Endothelial cell of umbilical vein (primary cell): ENCODE measurements at regions of chr4 and their contacts with region 1.

Region 1: GRCh38 chr4:146342600-146343192 is 128.4 kb downstream of the REELD1 start:
- DNase-seq: peak; percentile 70
- H3K4me3 ChIP-seq: no peak overlapping the region
- H3K27ac ChIP-seq: no peak overlapping the region
- H3K4me1 ChIP-seq: peaks cover 5% of the 10 kb centered on the region
- H3K27me3 ChIP-seq: no peaks in the 10 kb centered on the region
- CTCF ChIP-seq: peak in 1 of 2 donors; percentile 19
- POLR2A ChIP-seq: no peak

Region 2: GRCh38 chr4:146095091-146095690 is 247.5 kb before region 1 on chr4:
- CTCF ChIA-PET with region 1: interaction called, 17 read pairs
- POLR2A ChIA-PET with region 1: no interaction called
- dilution Hi-C with region 1: no loop called
- intact Hi-C with region 1: loop called (anchors 5 kb)
- DNase-seq: peak; percentile 61
- H3K4me3 ChIP-seq: no peak overlapping the region
- H3K27ac ChIP-seq: no peak overlapping the region
- H3K4me1 ChIP-seq: no peaks in the 10 kb centered on the region
- H3K27me3 ChIP-seq: peaks cover 4 to 9% of the 10 kb centered on the region in 2 experiments
- CTCF ChIP-seq: peak; percentile 55 to 59
- POLR2A ChIP-seq: no peak

Region 3: GRCh38 chr4:146232131-146232722 is 110.5 kb before region 1 on chr4:
- CTCF ChIA-PET with region 1: no interaction called
- POLR2A ChIA-PET with region 1: no interaction called
- dilution Hi-C with region 1: no loop called
- intact Hi-C with region 1: no loop called
- DNase-seq: no peak
- H3K4me3 ChIP-seq: no peak overlapping the region
- H3K27ac ChIP-seq: no peak overlapping the region
- H3K4me1 ChIP-seq: no peaks in the 10 kb centered on the region
- H3K27me3 ChIP-seq: peaks cover 3% of the 10 kb centered on the region in 2 experiments
- CTCF ChIP-seq: no peak
- POLR2A ChIP-seq: no peak

Region 4: DNA sequence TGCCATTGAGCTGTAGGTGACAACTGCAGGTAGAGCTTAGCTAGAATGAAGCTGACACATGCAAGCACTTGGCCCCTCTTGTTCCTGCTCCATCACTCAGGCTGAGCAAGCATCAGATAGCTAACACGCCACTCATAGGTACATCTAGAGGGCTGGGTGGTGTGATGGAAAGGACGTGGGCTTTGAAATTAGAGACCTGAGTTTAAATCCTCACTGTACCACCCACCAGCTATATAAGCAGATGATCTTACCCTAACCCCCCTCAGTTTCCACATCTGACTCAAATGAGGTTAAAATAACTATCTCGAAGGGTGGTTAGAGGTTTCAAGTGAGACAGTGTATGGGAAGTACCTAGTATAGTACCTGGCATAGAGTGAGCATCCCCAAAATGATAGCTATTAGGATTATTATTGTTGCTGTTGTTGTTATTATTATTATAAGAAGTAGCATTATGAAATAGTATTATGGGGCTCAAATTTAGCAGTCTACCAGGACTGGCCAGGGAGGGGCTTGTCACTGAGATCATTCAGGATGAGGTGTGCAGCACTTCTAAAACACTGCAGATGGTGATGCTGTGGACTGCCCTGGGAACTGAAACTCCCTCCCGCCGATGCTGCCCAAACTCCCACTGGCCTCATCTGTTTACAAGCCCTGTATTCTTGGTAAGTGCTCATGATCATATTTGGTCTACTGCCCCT is 69.3 kb before region 1 on chr4:
- CTCF ChIA-PET with region 1: no interaction called
- POLR2A ChIA-PET with region 1: no interaction called
- dilution Hi-C with region 1: no loop called
- intact Hi-C with region 1: no loop called
- DNase-seq: no peak
- H3K4me3 ChIP-seq: no peak overlapping the region
- H3K27ac ChIP-seq: no peak overlapping the region
- H3K4me1 ChIP-seq: no peaks in the 10 kb centered on the region
- H3K27me3 ChIP-seq: no peaks in the 10 kb centered on the region
- CTCF ChIP-seq: no peak
- POLR2A ChIP-seq: no peak

Region 5: GRCh38 chr4:146407669-146408084 is 65.0 kb after region 1 on chr4:
- CTCF ChIA-PET with region 1: interaction called, 11 read pairs
- POLR2A ChIA-PET with region 1: no interaction called
- dilution Hi-C with region 1: no loop called
- intact Hi-C with region 1: no loop called
- DNase-seq: peak; percentile 99
- H3K4me3 ChIP-seq: peak overlapping the region in 1 of 3 experiments; percentile 29
- H3K27ac ChIP-seq: peak overlapping the region; percentile 97
- H3K4me1 ChIP-seq: peaks cover 26% of the 10 kb centered on the region
- H3K27me3 ChIP-seq: no peaks in the 10 kb centered on the region
- CTCF ChIP-seq: no peak
- POLR2A ChIP-seq: peak; percentile 52

Region 6: GRCh38 chr4:146545102-146545501 is 202.4 kb after region 1 on chr4:
- CTCF ChIA-PET with region 1: interaction called, 10 read pairs
- POLR2A ChIA-PET with region 1: no interaction called
- dilution Hi-C with region 1: no loop called
- intact Hi-C with region 1: no loop called
- DNase-seq: peak; percentile 9
- H3K4me3 ChIP-seq: no peak overlapping the region
- H3K27ac ChIP-seq: no peak overlapping the region
- H3K4me1 ChIP-seq: no peaks in the 10 kb centered on the region
- H3K27me3 ChIP-seq: peaks cover 2 to 6% of the 10 kb centered on the region in 2 experiments
- CTCF ChIP-seq: peak; percentile 18 to 33
- POLR2A ChIP-seq: no peak

Region 7: GRCh38 chr4:146709956-146710355 is 367.3 kb after region 1 on chr4:
- CTCF ChIA-PET with region 1: no interaction called
- POLR2A ChIA-PET with region 1: no interaction called
- dilution Hi-C with region 1: no loop called
- intact Hi-C with region 1: loop called (anchors 10 kb)
- DNase-seq: no peak
- H3K4me3 ChIP-seq: no peak overlapping the region
- H3K27ac ChIP-seq: no peak overlapping the region
- H3K4me1 ChIP-seq: no peaks in the 10 kb centered on the region
- H3K27me3 ChIP-seq: peaks cover 0 to 2% of the 10 kb centered on the region in 2 experiments
- CTCF ChIP-seq: no peak
- POLR2A ChIP-seq: no peak